BJ (cell line): ENCODE measurements at regions of chr16 and their contacts with region 1.

Region 1: DNA sequence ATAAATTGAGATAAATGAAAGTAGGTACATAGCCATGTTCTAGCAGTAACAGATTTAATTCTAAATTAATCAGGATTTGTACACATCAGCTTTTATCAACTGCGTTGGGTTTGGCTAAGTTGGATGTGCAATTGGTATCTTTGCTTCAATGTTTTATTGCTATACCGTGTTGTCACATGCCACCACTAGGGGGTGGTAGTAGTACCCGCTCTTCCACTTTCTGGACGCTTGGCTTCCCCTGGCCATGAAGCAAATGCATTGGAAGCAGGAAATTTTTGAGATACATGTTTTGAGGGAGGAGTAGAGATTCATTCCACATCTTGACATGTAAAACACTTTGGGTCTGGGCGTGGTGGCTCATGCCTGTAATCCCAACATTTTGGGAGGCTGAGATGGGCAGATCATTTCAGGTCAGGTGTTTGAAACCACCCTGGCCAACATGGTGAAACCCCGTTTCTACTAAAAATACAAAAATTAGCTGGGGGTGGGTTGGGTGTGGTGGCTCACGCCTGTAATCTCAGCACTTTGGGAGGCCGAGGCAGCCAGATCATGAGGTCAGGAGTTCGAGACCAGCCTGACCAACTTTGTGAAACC is 58.6 kb downstream of the EMP2 start:
- DNase-seq: no peak
- H3K4me3 ChIP-seq: no peak overlapping the region
- H3K27me3 ChIP-seq: no peaks in the 10 kb centered on the region
- CTCF ChIP-seq: peak; percentile 87

Region 2: GRCh38 chr16:10419712-10420111 is 102.1 kb before region 1 on chr16:
- CTCF ChIA-PET with region 1: no interaction called
- POLR2A ChIA-PET with region 1: no interaction called
- DNase-seq: no peak
- H3K4me3 ChIP-seq: no peak overlapping the region
- H3K27me3 ChIP-seq: no peaks in the 10 kb centered on the region
- CTCF ChIP-seq: no peak

Region 3: DNA sequence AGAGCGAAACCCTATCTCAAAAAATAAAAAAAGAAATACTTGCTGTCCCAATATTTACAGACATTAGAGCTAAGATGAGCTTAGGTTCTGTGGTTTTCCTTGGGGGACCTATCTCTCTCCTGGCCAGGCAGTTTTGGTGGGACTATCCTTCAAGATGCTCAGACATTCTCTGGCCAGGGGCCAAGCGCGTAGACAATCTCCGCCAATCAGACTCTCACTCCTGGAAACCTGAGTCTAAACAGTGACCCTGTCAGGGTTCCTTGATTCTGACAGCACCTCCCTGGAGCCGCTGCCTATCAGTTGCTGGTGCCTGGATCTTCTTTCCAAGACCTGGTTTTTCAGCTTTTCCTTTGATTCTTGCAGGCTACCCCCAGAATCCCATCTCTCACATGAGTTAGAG is 13.0 kb after region 1 on chr16:
- CTCF ChIA-PET with region 1: interaction called, 26 read pairs
- POLR2A ChIA-PET with region 1: no interaction called
- DNase-seq: no peak
- H3K4me3 ChIP-seq: no peak overlapping the region
- H3K27me3 ChIP-seq: no peaks in the 10 kb centered on the region
- CTCF ChIP-seq: no peak

Region 4: GRCh38 chr16:10579965-10580882 is 58.4 kb after region 1 on chr16 and contains the start of gene EMP2:
- CTCF ChIA-PET with region 1: interaction called, 15 read pairs
- POLR2A ChIA-PET with region 1: no interaction called
- DNase-seq: no peak
- H3K4me3 ChIP-seq: peak within 1 kb of the TSS; percentile 90
- H3K27me3 ChIP-seq: no peaks in the 10 kb centered on the region
- CTCF ChIP-seq: peak; percentile 76
- polyA plus RNA-seq, gene EMP2: 44.6 and 57.8 TPM in 2 replicates

Region 5: GRCh38 chr16:10737068-10737625 is 215.4 kb after region 1 on chr16:
- CTCF ChIA-PET with region 1: interaction called, 83 read pairs
- POLR2A ChIA-PET with region 1: no interaction called
- DNase-seq: no peak
- H3K4me3 ChIP-seq: no peak overlapping the region
- H3K27me3 ChIP-seq: no peaks in the 10 kb centered on the region
- CTCF ChIP-seq: peak; percentile 85

Region 6: DNA sequence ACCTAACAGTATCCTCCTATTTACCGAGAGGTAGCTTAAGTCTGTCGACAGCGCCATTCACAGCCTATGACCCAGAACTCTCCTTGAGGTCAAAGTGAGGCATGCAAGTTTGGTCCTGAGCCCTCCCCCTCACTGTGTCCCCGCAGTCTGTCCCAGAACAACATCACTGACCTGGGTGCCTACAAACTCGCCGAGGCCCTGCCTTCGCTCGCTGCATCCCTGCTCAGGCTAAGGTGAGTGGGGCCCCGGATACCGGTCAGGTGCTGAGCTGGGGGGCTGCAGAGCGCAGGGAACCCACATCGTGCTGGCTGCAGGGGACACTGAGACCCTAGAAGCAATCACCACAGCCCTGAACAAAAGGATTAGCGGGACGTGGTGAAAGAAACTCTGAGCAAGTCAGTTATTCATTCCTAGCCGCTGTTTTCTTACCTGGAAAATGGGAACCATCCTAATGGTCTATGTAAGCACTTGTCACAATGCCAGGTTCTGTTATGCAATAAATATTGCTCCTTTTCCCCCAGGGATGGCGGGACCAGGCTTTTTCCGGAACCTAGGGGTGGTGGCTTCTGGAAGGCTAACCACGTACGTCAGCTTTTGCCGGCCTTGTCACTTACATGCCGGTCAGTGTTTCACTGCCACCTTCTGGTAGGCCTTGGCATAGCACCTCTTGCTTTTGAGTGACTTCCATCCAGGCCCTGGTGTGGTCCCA is 396.7 kb after region 1 on chr16:
- CTCF ChIA-PET with region 1: interaction called, 11 read pairs
- POLR2A ChIA-PET with region 1: no interaction called
- DNase-seq: peak; percentile 50
- H3K4me3 ChIP-seq: no peak overlapping the region
- H3K27me3 ChIP-seq: no peaks in the 10 kb centered on the region; the same call in 1 of the 2 replicates
- CTCF ChIP-seq: peak; percentile 99